Naive thymus-derived CD8-positive, alpha-beta T cell (primary cell): ENCODE measurements at regions of chr19 and their contacts with region 1.

Region 1: DNA sequence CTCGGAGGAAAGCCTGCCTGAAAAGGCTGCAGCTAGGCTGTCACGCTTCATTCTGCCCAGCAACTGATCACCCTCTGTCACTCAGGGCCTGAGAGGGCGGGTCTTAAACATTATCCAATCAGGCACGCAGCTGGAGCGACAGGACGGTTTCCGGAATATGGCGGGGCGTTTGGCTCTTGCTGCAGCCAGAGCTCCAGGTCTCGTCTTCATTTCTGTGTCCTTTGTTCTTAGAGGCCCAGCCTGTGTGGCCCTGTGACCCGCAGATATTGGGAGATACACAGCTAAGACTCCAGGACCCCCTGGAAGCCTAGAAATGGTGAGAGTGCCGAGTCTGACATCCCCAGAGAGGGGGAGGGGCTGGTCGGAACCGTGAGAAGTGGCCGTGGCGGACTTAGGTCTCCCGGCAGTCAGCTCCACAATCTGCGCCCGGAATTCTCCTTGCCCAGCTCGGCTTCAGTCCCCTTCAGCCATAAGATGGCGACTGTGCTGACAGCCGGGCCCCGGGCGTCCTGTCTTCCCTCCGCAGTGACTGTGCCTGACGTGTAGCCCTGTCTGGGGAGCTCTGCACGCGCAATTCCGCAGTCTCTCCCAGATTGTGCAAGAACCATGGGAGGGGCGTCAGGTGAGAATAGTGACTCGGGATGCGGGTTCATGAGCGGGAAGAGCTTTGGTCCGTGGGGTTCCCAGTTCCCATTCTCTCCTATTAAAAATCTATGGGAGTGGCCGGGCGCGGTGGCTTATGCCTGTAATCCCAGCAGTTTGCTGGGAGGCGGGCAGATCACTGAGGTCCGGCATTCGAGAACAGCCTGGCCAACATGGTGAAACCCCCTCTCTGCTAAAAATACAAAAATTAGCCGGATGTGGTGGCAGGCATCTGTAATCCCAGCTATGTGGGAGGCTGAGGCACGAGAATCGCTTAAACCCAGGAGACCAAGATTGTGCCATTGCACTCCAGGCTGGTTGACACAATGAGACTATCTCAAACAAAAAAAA is at the start of gene ZNF429:
- DNase-seq: peak; percentile 68 to 96 (median 90)
- ATAC-seq: peak; percentile 99
- H3K4me3 Mint-ChIP-seq: peak within 1 kb of the TSS; percentile 99 to 100 (median 100)
- H3K27ac Mint-ChIP-seq: peak within 1 kb of the TSS; percentile 96 to 100 (median 100)
- H3K4me1 Mint-ChIP-seq: peaks cover 10 to 54% (median 43%) of the 10 kb centered on the region in 4 donors
- H3K27me3 Mint-ChIP-seq: no peaks in the 10 kb centered on the region
- polyA plus RNA-seq, gene ZNF429: 23.0 to 37.8 (median 34.9) TPM

Region 2: GRCh38 chr19:21396893-21397572 is 108.7 kb before region 1 on chr19 and contains the start of gene ZNF493:
- POLR2A ChIA-PET with region 1: interaction called, 20 read pairs
- DNase-seq: peak; percentile 73 to 96 (median 92)
- ATAC-seq: peak; percentile 99
- H3K4me3 Mint-ChIP-seq: peak within 1 kb of the TSS; percentile 87 to 99 (median 98)
- H3K27ac Mint-ChIP-seq: peak within 1 kb of the TSS; percentile 86 to 97 (median 94)
- H3K4me1 Mint-ChIP-seq: peaks cover 8 to 42% (median 38%) of the 10 kb centered on the region in 4 donors
- H3K27me3 Mint-ChIP-seq: peaks cover 0 to 2% (median 0%) of the 10 kb centered on the region in 5 donors
- polyA plus RNA-seq, gene ZNF493: 20.4 to 28.1 (median 24.7) TPM

Region 3: GRCh38 chr19:21410166-21410565 is 95.6 kb before region 1 on chr19:
- POLR2A ChIA-PET with region 1: no interaction called
- DNase-seq: no peak
- ATAC-seq: no peak
- H3K4me3 Mint-ChIP-seq: no peak overlapping the region
- H3K27ac Mint-ChIP-seq: no peak overlapping the region
- H3K4me1 Mint-ChIP-seq: no peaks in the 10 kb centered on the region
- H3K27me3 Mint-ChIP-seq: no peaks in the 10 kb centered on the region

Region 4: GRCh38 chr19:21492947-21493906 is 12.5 kb before region 1 on chr19:
- POLR2A ChIA-PET with region 1: no interaction called
- DNase-seq: no peak
- ATAC-seq: no peak
- H3K4me3 Mint-ChIP-seq: no peak overlapping the region
- H3K27ac Mint-ChIP-seq: no peak overlapping the region
- H3K4me1 Mint-ChIP-seq: peaks cover 0 to 4% (median 0%) of the 10 kb centered on the region in 4 donors
- H3K27me3 Mint-ChIP-seq: no peaks in the 10 kb centered on the region

Region 5: GRCh38 chr19:21586311-21587116 is 80.8 kb after region 1 on chr19:
- POLR2A ChIA-PET with region 1: interaction called, 27 read pairs
- DNase-seq: peak in 7 of 10 donors; percentile 14 to 41 (median 32)
- ATAC-seq: peak; percentile 75 to 78
- H3K4me3 Mint-ChIP-seq: peak overlapping the region in 9 of 10 donors; percentile 75 to 95 (median 89)
- H3K27ac Mint-ChIP-seq: peak overlapping the region in 8 of 10 donors; percentile 44 to 93 (median 86)
- H3K4me1 Mint-ChIP-seq: peaks cover 26 to 70% (median 34%) of the 10 kb centered on the region in 4 donors
- H3K27me3 Mint-ChIP-seq: peaks cover 0 to 2% (median 0%) of the 10 kb centered on the region in 5 donors

Region 6: DNA sequence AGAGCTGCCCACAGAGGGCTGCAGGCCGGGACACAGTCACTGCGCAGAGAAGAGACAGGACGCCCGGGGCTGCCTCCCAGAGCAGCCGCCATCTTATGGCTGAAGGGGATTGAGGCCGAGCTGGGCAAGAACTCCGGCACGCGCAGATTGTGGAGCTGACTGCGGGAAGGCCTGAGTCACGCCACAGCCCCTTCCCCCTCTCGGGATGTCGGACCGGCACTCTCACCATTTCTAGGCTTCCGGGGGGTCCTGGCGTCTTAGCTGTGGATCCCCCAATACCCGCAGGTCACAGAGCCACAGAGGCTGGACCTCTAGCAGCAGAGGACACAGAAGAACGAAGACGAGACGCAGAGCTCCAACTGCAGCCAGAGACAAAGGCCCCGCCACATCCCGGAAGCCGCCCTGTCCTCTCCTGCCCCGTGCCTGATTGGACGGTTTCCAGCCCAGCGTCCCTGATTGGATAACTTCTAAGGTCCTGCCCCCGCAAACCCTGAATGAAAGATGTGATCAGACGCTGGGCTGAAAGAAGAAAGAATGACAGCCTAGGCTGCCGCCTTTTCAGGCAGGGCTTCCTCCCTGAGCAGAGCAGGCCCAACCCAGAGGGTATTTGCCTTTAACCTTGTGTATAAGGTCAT is 330.2 kb after region 1 on chr19 and contains the start of gene ZNF43:
- POLR2A ChIA-PET with region 1: interaction called, 35 read pairs
- DNase-seq: peak; percentile 79 to 97 (median 94)
- ATAC-seq: peak; percentile 97 to 99
- H3K4me3 Mint-ChIP-seq: peak within 1 kb of the TSS; percentile 97 to 100 (median 99)
- H3K27ac Mint-ChIP-seq: peak within 1 kb of the TSS; percentile 97 to 99 (median 99)
- H3K4me1 Mint-ChIP-seq: peaks cover 3 to 40% (median 29%) of the 10 kb centered on the region in 4 donors
- H3K27me3 Mint-ChIP-seq: no peaks in the 10 kb centered on the region
- polyA plus RNA-seq, gene ZNF43: 14.8 to 18.0 (median 17.6) TPM